Right ventricle myocardium superior (tissue), 1 donor: ENCODE measurements at regions of chr15 and their contacts with region 1.

Region 1: GRCh38 chr15:34708422-34708821 is 46.4 kb downstream of the GJD2 start:
- DNase-seq: no peak
- ATAC-seq: peak; percentile 87

Region 2: DNA sequence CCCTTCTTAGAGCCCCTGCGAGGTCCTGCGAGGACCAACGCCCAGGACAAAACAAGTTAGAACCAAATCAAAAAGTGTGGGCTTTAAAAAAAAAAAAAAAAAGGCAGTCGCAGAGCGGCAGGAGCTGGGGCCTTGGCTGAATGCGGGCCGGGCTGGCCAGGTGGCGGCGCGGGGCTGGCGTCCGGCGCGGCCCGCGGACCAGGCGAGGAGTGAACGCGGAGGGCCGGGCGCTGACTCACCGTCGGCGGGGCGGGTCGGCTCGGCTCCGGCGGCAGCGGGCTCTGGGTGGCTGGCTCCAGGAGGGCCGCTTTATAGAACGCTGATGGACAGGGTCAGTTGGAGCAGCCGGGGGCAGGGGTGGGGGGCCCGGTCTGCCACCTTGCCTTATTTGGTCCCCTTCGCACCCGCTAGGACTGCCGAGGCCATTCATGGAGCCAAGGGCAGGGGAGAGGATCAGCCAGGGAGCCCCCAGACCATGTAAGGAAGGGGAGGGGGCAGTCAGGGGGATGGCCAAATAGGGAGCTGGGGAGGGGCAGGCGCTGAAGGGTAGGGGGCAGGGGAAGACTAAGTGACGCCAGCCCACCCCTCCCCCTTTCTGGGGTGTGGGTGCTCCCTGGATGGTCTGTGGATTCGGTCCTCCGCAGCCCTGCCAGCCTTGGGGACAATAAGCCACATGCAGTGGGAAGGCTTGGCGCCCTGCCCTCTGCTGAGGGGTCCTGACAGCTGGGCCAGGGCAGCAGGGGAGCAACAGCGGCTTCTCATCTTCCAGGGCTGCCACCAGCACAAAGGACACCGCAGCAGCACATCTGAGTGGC is 87.1 kb after region 1 on chr15 and contains the start of gene ACTC1:
- intact Hi-C with region 1: loop called (anchors 5 kb)
- DNase-seq: peak; percentile 83
- ATAC-seq: peak; percentile 56
- total RNA-seq, gene ACTC1: 12,822 TPM

Region 3: DNA sequence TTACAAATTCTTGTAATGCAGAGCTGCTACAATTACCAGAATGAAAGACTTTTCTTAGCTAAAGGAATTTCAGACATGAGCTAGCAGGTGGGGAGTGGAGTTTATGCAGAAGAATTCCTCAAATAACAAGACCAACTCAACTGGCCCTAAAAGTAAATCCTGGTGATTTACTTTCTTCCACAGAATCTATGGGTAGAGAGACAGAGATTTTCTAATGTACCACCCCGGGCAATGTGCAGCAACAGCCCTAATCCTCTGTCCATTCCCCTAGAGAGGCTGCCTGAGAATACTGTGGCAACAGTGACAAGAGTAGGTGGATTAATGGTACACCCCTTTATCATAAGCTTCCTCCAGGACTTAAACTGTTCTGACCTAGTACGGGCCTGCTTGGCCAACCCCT is 205.9 kb after region 1 on chr15:
- intact Hi-C with region 1: loop called (anchors 10 kb)
- DNase-seq: no peak
- ATAC-seq: no peak